ENCODE measurements at regions of chr20 and their contacts with region 1.

Region 1: DNA sequence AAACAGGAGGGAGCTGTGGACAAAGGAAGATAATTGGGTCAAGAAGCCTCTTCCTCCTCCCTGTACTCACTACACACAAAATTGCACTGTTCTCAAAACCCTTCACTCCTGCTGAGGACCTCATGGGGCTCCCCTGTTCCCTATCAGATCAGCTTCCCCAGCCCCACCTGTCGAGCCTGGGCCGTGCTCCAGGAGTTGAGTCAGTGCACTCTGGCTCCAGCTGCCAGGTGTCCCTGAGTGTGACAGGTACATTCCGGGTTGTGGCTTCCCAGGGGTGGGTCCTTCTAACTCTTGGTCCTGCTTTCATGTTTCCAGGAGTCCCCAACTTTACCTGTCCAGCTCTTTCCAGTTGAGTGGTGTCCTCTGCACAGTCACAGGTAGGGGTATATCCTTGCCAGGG is 8.4 kb downstream of the RAB5IF start:
- DNase-seq: no peak
- H3K4me3 ChIP-seq: no peak overlapping the region
- H3K27ac ChIP-seq: peak overlapping the region in 2 of 4 donors; percentile 31 to 38
- H3K4me1 ChIP-seq: peaks cover 0 to 19% (median 0%) of the 10 kb centered on the region in 3 donors
- H3K27me3 ChIP-seq: no peaks in the 10 kb centered on the region
- CTCF ChIP-seq: no peak
- POLR2A ChIP-seq: no peak

Region 2: GRCh38 chr20:36728986-36729385 is 115.0 kb after region 1 on chr20:
- intact Hi-C with region 1: no loop called
- DNase-seq: no peak
- H3K4me3 ChIP-seq: no peak overlapping the region
- H3K27ac ChIP-seq: no peak overlapping the region
- H3K4me1 ChIP-seq: peaks cover 4 to 25% (median 6%) of the 10 kb centered on the region in 3 donors
- H3K27me3 ChIP-seq: no peaks in the 10 kb centered on the region
- CTCF ChIP-seq: peak in 1 of 6 experiments; percentile 19
- POLR2A ChIP-seq: no peak

Region 3: DNA sequence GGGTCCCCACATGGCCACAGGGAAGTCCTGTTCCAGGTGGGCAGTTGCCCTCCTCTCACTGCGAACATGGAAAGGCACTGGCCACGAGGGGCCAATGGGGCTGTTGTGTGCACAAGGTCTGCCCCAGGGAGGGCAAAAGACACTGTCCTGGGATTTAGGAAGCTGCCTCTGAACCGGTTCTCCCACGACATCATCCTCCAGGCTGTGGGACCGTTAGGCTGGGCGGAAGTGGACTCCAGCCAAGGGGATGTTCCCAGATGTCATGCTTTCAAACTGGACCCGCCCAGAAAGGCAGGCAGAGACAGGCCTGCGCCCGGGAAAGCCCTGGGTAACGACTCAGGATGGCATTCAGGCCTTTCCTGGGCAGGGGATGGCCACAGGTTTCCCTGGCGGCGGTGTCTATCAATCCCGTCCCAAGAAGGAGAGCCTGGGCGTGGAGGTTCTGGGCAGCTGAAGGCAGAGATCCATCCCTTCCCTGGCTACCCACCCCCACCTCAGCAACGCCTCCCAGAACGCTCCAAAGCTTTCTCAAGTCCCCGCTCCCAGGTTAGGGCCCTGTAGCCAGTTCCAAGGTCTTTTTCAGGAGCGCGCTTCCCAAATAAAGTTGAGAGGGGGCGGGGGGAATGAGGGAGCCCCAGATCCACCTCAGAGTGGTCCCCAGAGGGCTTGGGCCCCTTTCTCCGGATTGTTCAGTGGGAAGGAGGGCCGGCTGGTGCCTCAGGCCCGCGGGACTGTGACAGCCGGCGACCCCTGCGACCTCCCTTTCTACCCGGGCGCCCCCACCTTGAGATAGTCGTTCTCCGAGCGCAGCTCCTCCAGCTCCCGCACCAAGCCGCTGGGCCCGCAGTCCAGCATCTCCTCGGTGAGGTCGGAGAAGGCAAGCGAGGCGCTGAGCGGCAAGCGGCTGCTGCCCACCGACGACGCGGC is 248.2 kb after region 1 on chr20:
- intact Hi-C with region 1: loop called (anchors 10 kb)
- DNase-seq: no peak
- H3K4me3 ChIP-seq: peak overlapping the region; percentile 61 to 89 (median 74)
- H3K27ac ChIP-seq: peak overlapping the region; percentile 85 to 96 (median 92)
- H3K4me1 ChIP-seq: peaks cover 32 to 64% (median 50%) of the 10 kb centered on the region in 3 donors
- H3K27me3 ChIP-seq: no peaks in the 10 kb centered on the region
- CTCF ChIP-seq: peak in 2 of 6 experiments; percentile 9 to 10
- POLR2A ChIP-seq: peak in 3 of 4 donors; percentile 66 to 86 (median 79)